Mucosa of descending colon (tissue), 3 donors: ENCODE measurements at regions of chr6 and their contacts with region 1.

Region 1: GRCh38 chr6:165439928-165440554 is 130.6 kb upstream of the C6orf118 start:
- DNase-seq: no peak
- ATAC-seq: no peak
- H3K4me3 ChIP-seq: no peak overlapping the region
- H3K4me1 ChIP-seq: no peaks in the 10 kb centered on the region
- CTCF ChIP-seq: no peak

Region 2: GRCh38 chr6:165755583-165755982 is 315.5 kb after region 1 on chr6:
- intact Hi-C with region 1: no loop called
- DNase-seq: no peak
- ATAC-seq: no peak
- H3K4me3 ChIP-seq: no peak overlapping the region
- H3K4me1 ChIP-seq: no peaks in the 10 kb centered on the region
- CTCF ChIP-seq: no peak

Region 3: DNA sequence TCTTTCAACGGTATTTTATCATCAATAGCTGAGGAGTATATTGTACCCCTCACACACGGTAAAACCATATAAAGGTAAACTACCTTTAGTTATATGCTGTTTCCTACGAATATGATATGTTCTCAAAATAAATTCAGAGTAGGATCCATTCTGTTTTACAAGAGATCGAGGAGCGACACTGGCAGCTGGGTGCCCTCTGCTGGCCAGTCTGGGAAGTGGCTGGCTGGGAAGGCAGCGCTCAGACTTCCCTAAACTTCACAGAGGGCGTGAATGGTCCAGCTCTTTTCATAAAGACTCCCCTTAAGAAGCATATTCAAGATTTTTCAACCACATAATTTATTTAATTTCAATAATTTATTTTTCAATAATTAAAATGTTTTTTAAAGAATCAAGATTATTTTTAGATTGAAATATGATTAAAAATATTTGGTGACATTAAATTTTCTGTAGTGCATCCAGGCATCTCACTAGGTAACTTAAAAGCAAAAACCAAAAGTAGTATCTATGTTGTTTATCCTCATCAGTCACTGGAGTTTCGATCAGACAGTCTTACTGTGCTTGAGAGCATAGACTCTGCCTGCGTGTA is 410.5 kb after region 1 on chr6:
- intact Hi-C with region 1: loop called in 1 of 2 experiments (anchors 10 kb)
- DNase-seq: peak in 2 of 3 donors; percentile 81 to 82
- ATAC-seq: peak; percentile 39
- H3K4me3 ChIP-seq: no peak overlapping the region
- H3K4me1 ChIP-seq: peaks cover 23% of the 10 kb centered on the region
- CTCF ChIP-seq: peak; percentile 88